ENCODE measurements at regions of chr3 and their contacts with region 1.

Region 1: GRCh38 chr3:126293370-126294082 is 63.7 kb downstream of the KLF15 start:
- DNase-seq: peak; percentile 46 to 85
- ATAC-seq: peak; percentile 87 to 91
- H3K4me3 ChIP-seq: no peak overlapping the region
- H3K27ac ChIP-seq: peak overlapping the region; percentile 45 to 72 (median 63)
- H3K4me1 ChIP-seq: peaks cover under 1 to 3% of the 10 kb centered on the region in 2 donors
- H3K27me3 ChIP-seq: no peaks in the 10 kb centered on the region
- CTCF ChIP-seq: no peak
- POLR2A ChIP-seq: no peak

Region 2: DNA sequence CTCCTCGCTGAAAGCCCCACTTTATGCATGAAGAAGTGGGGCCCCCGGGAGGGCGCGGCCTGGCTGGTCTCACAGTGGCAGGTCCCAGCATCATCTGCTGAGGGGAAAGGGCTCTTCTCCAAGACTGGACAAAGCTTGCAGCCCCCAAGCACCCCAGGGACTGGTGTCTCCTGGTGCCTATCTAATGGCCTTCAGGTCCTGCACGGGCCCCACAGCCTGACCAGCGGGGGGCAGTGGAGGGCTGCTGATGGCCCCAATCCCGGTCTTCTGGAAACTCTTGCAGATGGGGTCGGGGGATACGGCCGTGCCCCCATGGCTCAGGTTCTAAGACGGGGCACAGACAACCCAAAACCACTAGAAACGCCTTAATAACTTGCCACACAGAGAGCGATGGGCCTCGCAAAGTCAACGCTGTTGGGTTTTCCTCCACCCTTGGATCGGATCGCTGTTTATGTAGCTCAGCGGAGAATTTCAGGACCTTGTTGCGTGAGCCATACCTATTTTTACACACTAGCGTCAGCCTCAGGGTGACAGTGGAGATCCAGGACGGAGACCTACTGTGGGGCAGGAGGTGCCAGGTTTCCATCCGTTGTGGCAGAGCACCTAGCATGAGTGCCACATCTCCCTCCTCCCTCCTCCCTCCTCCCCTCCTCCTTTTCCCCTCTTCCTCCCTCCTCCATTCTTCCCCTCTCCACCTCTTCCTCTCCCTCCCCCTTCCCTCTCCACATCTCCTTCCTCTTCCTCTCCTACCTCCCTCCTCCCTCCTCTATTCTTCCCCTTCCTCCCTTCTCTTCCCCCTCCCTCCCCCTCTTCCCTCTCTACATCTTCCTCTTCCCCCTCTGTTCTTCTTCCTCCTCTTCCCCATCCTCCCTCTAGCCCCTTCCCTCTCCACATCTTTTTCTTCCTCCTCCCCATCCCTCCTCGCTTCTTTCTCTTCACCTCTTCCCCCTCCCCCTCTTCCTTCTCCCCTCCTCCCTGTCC is 33.8 kb before region 1 on chr3:
- in situ Hi-C with region 1: no loop called
- intact Hi-C with region 1: loop called (anchors 2 kb)
- DNase-seq: peak; percentile 88 to 93
- ATAC-seq: peak; percentile 94 to 95
- H3K4me3 ChIP-seq: peak overlapping the region; percentile 26 to 44 (median 36)
- H3K27ac ChIP-seq: peak overlapping the region; percentile 80 to 92 (median 89)
- H3K4me1 ChIP-seq: peaks cover 25 to 30% of the 10 kb centered on the region in 2 donors
- H3K27me3 ChIP-seq: no peaks in the 10 kb centered on the region
- CTCF ChIP-seq: peak; percentile 81 to 97 (median 94)
- POLR2A ChIP-seq: peak; percentile 51 to 63

Region 3: DNA sequence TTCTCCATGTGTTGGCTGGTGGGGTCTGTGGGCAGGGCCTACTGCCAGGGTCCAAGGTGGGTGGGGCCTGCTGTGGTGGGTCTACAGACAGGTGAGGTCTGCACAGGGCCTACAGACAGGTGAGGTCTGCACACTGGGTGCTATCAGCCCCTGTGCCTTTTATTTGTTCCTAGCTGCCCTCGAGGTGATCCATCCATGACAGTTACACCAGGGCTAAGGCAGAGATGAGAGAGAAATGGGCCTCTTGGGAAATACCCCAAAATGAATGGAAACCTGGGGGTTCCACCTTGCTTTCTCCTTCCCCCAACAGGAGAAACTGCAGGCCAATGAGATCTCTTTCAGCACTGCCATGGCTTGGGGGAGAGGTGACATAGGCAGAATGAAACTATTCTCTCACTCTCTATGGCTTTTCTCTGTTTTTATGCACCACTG is 137.6 kb after region 1 on chr3:
- in situ Hi-C with region 1: no loop called
- intact Hi-C with region 1: no loop called
- DNase-seq: no peak
- ATAC-seq: no peak
- H3K4me3 ChIP-seq: no peak overlapping the region
- H3K27ac ChIP-seq: no peak overlapping the region
- H3K4me1 ChIP-seq: peaks cover 11 to 15% of the 10 kb centered on the region in 2 donors
- H3K27me3 ChIP-seq: no peaks in the 10 kb centered on the region
- CTCF ChIP-seq: no peak
- POLR2A ChIP-seq: no peak

Region 4: GRCh38 chr3:127002195-127003174 is 709.0 kb after region 1 on chr3:
- in situ Hi-C with region 1: no loop called
- intact Hi-C with region 1: no loop called
- DNase-seq: peak; percentile 46 to 73
- ATAC-seq: peak; percentile 51 to 71
- H3K4me3 ChIP-seq: no peak overlapping the region
- H3K27ac ChIP-seq: peak overlapping the region; percentile 42 to 74 (median 54)
- H3K4me1 ChIP-seq: peaks cover 12 to 22% of the 10 kb centered on the region in 2 donors
- H3K27me3 ChIP-seq: no peaks in the 10 kb centered on the region
- CTCF ChIP-seq: peak in 2 of 5 experiments; percentile 17 to 39
- POLR2A ChIP-seq: no peak